ENCODE measurements at regions of chr12 and their contacts with region 1.

Region 1: DNA sequence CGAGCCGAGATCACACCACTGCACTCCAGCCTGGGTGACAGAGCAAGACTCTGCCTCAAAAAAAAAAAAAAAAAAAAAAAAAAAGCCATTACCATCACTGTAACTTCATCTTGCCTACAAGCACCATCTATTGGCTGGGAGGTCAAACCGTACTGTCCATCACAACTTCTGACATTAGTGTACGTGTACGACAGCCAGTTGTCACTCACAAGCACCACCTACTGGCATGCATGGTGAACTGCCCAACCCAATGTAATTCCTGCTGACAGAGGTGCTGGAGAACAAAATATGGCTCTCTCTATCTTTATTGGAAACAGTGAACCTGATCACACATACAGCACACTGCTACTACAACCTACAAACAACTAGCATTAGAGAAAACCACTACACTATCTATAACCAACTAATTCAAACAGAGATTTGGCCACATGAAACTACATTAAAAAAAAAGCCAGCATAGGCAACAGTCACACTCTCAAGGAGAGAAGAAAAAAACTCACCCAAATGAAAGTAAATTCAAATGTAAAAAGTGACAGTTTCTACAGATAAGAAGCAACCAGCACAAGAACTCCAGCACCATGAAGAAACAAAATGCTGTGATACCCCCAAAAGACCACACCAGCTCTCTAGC is 82.3 kb downstream of the PUS7L start:
- DNase-seq: peak; percentile 62
- H3K4me3 ChIP-seq: no peak overlapping the region
- H3K27ac ChIP-seq: no peak overlapping the region
- H3K4me1 ChIP-seq: no peaks in the 10 kb centered on the region
- H3K27me3 ChIP-seq: peaks cover 10% of the 10 kb centered on the region
- CTCF ChIP-seq: peak; percentile 79

Region 2: DNA sequence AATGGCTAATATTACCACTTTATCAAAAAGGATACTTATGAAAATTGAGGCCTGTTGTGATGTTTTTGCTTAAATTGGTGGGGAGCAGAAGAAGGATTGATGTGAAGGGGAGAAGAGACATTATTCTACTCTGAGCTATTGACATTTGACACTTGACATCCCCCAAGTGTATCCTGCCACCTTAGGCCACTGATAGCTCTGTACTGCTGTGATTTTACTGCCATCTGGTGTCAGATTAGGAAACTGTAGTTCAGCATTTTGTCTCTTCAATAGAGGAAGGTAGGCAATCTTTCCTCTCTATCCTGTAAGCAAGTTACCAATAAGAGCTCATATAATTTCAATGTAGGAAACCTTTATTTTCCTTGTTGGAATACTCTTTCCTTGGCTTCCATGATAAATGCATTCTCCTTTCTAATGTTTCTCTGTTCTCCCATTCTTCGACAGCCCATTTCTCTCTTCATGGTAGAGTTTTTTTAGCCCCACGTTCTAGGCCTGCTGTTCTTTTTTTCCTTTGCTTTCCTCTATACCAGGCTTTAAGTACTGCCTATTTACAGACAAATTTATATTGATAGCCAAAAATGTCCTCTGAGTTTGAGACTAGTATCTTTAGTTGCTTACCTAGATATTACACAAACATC is 1304.0 kb before region 1 on chr12:
- CTCF ChIA-PET with region 1: no interaction called
- POLR2A ChIA-PET with region 1: interaction called, 23 read pairs
- intact Hi-C with region 1: no loop called
- DNase-seq: peak; percentile 70
- H3K4me3 ChIP-seq: no peak overlapping the region
- H3K27ac ChIP-seq: no peak overlapping the region
- H3K4me1 ChIP-seq: no peaks in the 10 kb centered on the region
- H3K27me3 ChIP-seq: no peaks in the 10 kb centered on the region
- CTCF ChIP-seq: peak; percentile 82